ENCODE measurements at regions of chr5 and their contacts with region 1.

Region 1: GRCh38 chr5:170338933-170339779 is 41.6 kb upstream of the LCP2 start:
- DNase-seq: peak; percentile 43 to 81 (median 66)
- H3K4me3 ChIP-seq: no peak overlapping the region
- H3K4me3 Mint-ChIP-seq: peak overlapping the region in 2 of 7 donors; percentile 29 to 48
- H3K27ac ChIP-seq: no peak overlapping the region
- H3K27ac Mint-ChIP-seq: peak overlapping the region; percentile 60 to 94 (median 62)
- H3K4me1 ChIP-seq: peaks cover 47% of the 10 kb centered on the region
- H3K4me1 Mint-ChIP-seq: peaks cover 36 to 40% (median 40%) of the 10 kb centered on the region in 3 donors
- H3K27me3 ChIP-seq: no peaks in the 10 kb centered on the region
- H3K27me3 Mint-ChIP-seq: peaks cover 0 to 5% of the 10 kb centered on the region in 2 donors

Region 2: GRCh38 chr5:170225326-170226128 is 113.6 kb before region 1 on chr5:
- CTCF ChIA-PET with region 1: interaction called, 172 read pairs
- POLR2A ChIA-PET with region 1: interaction called, 8 read pairs
- DNase-seq: peak; percentile 62 to 80 (median 63)
- H3K4me3 ChIP-seq: no peak overlapping the region
- H3K4me3 Mint-ChIP-seq: no peak overlapping the region
- H3K27ac ChIP-seq: no peak overlapping the region
- H3K27ac Mint-ChIP-seq: peak overlapping the region in 2 of 8 donors; percentile 5 to 74
- H3K4me1 ChIP-seq: no peaks in the 10 kb centered on the region
- H3K4me1 Mint-ChIP-seq: peaks cover 3 to 6% (median 4%) of the 10 kb centered on the region in 3 donors
- H3K27me3 ChIP-seq: no peaks in the 10 kb centered on the region
- H3K27me3 Mint-ChIP-seq: peaks cover 0 to 8% of the 10 kb centered on the region in 2 donors

Region 3: DNA sequence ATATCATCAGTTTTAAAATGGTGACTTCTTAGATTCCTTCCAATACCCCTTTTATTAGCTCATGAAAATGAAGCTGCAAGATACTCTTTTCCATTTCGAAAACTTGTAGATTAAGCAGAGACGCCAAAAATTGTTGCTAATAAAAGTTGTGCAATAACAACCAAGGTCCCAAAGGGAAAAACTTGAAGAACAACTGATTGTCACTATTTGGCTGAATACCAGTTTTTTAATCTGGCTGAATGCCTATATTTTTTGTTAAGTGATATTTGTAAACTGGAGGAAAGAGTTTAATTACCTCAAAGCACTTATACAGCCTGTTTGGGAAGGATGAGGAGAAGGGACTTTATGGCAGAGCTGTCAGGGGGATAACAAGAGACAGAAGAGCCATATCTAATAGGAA is 91.8 kb before region 1 on chr5:
- CTCF ChIA-PET with region 1: interaction called, 10 read pairs
- POLR2A ChIA-PET with region 1: no interaction called
- DNase-seq: no peak
- H3K4me3 ChIP-seq: no peak overlapping the region
- H3K4me3 Mint-ChIP-seq: no peak overlapping the region
- H3K27ac ChIP-seq: no peak overlapping the region
- H3K27ac Mint-ChIP-seq: peak overlapping the region in 6 of 8 donors; percentile 12 to 79 (median 28)
- H3K4me1 ChIP-seq: no peaks in the 10 kb centered on the region
- H3K4me1 Mint-ChIP-seq: peaks cover 15 to 44% (median 42%) of the 10 kb centered on the region in 3 donors
- H3K27me3 ChIP-seq: no peaks in the 10 kb centered on the region
- H3K27me3 Mint-ChIP-seq: no peaks in the 10 kb centered on the region

Region 4: GRCh38 chr5:170267431-170268152 is 71.6 kb before region 1 on chr5:
- CTCF ChIA-PET with region 1: interaction called, 132 read pairs
- POLR2A ChIA-PET with region 1: interaction called, 27 read pairs
- DNase-seq: peak; percentile 72 to 87 (median 78)
- H3K4me3 ChIP-seq: peak overlapping the region; percentile 35
- H3K4me3 Mint-ChIP-seq: peak overlapping the region; percentile 64 to 83 (median 70)
- H3K27ac ChIP-seq: peak overlapping the region; percentile 2
- H3K27ac Mint-ChIP-seq: peak overlapping the region; percentile 93 to 99 (median 96)
- H3K4me1 ChIP-seq: peaks cover 90% of the 10 kb centered on the region
- H3K4me1 Mint-ChIP-seq: peaks cover 86 to 97% (median 93%) of the 10 kb centered on the region in 3 donors
- H3K27me3 ChIP-seq: no peaks in the 10 kb centered on the region
- H3K27me3 Mint-ChIP-seq: peaks cover 0 to 2% of the 10 kb centered on the region in 2 donors

Region 5: DNA sequence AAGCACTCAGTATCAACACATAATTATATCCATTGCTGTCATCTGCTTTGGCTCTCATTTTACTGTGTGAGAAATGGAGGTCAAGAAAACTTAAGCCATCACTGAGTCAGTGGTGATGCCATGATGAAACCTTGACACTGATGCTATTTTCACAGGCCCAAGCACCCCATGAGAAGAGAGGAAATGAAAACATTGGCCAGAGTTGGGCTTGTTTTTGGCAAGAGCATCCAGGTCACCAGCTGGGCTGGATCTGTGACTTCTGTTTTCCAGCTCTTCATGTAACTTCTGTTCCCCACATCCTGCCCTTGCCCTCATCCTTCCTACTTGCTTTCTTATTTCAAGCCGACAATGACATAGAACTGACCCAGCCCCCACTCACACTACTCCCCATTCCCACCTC is 51.6 kb before region 1 on chr5:
- CTCF ChIA-PET with region 1: interaction called, 93 read pairs
- POLR2A ChIA-PET with region 1: interaction called, 10 read pairs
- DNase-seq: no peak
- H3K4me3 ChIP-seq: peak overlapping the region; percentile 17
- H3K4me3 Mint-ChIP-seq: peak overlapping the region; percentile 69 to 98 (median 75)
- H3K27ac ChIP-seq: no peak overlapping the region
- H3K27ac Mint-ChIP-seq: peak overlapping the region; percentile 89 to 99 (median 96)
- H3K4me1 ChIP-seq: peaks cover 98% of the 10 kb centered on the region
- H3K4me1 Mint-ChIP-seq: peaks cover 100% of the 10 kb centered on the region in 3 donors
- H3K27me3 ChIP-seq: no peaks in the 10 kb centered on the region
- H3K27me3 Mint-ChIP-seq: no peaks in the 10 kb centered on the region

Region 6: DNA sequence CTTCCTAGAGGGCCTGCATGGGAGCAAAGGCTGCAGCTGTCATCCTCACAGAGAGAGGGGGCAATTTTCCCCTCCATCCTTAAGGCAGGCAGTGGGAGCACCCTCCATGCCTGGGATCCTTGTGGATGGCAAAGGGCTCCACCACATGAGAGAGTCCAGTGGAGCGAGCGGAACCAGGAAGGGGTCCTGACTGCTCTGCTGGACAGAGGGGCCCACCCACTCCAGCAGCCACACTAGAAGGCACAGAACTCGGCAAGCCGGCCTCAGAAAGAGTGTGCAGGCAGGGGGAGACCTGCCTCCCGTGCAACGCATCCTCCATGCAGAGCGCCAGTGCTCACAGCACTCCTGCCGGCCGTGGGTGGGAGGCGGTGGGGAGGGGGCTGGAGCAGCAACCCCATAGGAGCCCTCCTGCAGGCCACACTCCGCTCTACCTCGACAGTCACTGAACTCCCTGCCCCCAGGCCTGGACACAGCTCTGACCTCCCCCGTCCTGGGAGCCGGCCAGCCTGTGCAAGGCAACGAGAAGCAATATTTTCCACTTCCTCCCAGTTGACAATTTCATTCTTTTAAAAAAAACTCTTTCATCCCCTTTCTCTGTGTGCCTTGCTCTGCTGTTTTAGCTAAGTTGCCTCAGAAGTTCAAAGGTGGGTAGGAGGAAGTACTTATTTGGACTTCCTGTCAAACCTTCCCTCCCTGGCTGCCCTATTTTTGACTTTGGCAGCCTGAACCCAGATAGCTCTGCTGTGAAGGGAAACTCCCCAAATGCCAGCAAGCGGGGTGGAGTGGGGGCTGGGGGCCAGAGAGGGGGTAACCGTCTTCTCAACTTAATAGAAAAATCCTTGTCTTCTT is 36.3 kb before region 1 on chr5:
- CTCF ChIA-PET with region 1: interaction called, 93 read pairs
- POLR2A ChIA-PET with region 1: interaction called, 67 read pairs
- DNase-seq: peak; percentile 65 to 86 (median 81)
- H3K4me3 ChIP-seq: peak overlapping the region; percentile 61
- H3K4me3 Mint-ChIP-seq: peak overlapping the region; percentile 78 to 94 (median 86)
- H3K27ac ChIP-seq: peak overlapping the region; percentile 40
- H3K27ac Mint-ChIP-seq: peak overlapping the region; percentile 89 to 100 (median 95)
- H3K4me1 ChIP-seq: peaks cover 68% of the 10 kb centered on the region
- H3K4me1 Mint-ChIP-seq: peaks cover 58 to 78% (median 73%) of the 10 kb centered on the region in 3 donors
- H3K27me3 ChIP-seq: no peaks in the 10 kb centered on the region
- H3K27me3 Mint-ChIP-seq: no peaks in the 10 kb centered on the region

Region 7: DNA sequence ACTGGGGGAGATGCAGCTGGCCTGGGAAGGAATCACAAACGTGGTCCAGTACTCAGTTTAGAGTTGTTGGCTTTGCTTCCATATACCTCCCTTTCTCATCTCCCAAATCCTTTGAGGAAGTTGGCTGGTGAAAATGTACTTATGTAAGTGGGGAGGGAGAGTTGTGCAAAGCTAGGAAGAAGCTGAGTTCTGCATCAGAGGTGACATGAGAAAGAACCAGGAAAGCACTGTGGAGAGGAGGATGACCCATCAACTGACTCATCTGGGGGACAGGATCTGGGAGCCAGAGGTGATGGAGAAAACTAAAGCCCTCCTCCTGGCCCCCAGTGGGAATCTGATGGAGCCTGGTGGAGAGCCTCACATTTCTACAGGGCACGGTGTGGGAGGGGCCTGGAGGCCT is 33.8 kb after region 1 on chr5:
- CTCF ChIA-PET with region 1: no interaction called
- POLR2A ChIA-PET with region 1: no interaction called
- DNase-seq: no peak
- H3K4me3 ChIP-seq: no peak overlapping the region
- H3K4me3 Mint-ChIP-seq: no peak overlapping the region
- H3K27ac ChIP-seq: no peak overlapping the region
- H3K27ac Mint-ChIP-seq: no peak overlapping the region
- H3K4me1 ChIP-seq: no peaks in the 10 kb centered on the region
- H3K4me1 Mint-ChIP-seq: no peaks in the 10 kb centered on the region
- H3K27me3 ChIP-seq: no peaks in the 10 kb centered on the region
- H3K27me3 Mint-ChIP-seq: peaks cover 3 to 11% of the 10 kb centered on the region in 2 donors

Region 8: DNA sequence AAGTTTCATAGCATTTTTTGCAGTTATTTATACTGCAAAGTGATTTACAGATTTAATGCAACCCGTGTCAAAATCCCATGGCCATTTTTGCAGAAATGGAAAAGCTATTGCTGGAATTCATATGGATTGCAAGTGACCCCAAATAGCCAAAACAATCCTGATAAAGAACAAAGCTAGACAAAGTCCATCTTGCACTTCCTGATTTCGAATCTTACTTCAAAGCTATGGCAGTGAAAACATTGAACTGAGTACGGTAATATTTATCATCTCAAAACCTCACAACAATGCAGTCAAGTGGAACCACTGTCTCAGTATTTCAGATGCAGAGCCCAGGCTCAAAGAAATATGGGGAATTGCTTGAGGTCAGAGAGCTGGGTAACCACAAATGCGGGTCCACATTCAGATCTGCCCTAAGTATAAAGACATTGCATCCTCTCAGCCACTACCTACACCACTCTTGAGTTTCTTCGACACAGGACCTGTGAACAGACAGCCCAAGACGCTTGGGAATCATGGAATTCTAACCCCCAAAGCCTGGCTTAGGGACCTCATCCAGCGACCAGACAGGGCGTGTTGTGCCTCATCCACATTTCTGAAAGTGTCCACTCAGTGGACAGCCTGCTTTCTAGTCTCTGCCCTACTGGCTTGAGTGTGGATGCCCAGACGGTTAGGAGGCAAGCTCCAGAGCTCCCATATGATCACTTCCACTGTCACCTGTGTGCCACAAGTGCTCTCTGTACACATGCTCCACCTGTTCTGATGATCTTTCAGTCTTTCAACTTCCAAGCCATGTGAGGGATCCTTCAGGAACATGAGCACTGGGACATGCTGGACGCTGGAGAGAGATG is 125.3 kb after region 1 on chr5:
- CTCF ChIA-PET with region 1: no interaction called
- POLR2A ChIA-PET with region 1: no interaction called
- DNase-seq: no peak
- H3K4me3 ChIP-seq: no peak overlapping the region
- H3K4me3 Mint-ChIP-seq: no peak overlapping the region
- H3K27ac ChIP-seq: no peak overlapping the region
- H3K27ac Mint-ChIP-seq: no peak overlapping the region
- H3K4me1 ChIP-seq: no peaks in the 10 kb centered on the region
- H3K4me1 Mint-ChIP-seq: no peaks in the 10 kb centered on the region
- H3K27me3 ChIP-seq: no peaks in the 10 kb centered on the region
- H3K27me3 Mint-ChIP-seq: peaks cover 14 to 21% of the 10 kb centered on the region in 2 donors

Measured in CD8-positive, alpha-beta memory T cell (primary cell).